ENCODE measurements at regions of chr9 and their contacts with region 1.

Region 1: DNA sequence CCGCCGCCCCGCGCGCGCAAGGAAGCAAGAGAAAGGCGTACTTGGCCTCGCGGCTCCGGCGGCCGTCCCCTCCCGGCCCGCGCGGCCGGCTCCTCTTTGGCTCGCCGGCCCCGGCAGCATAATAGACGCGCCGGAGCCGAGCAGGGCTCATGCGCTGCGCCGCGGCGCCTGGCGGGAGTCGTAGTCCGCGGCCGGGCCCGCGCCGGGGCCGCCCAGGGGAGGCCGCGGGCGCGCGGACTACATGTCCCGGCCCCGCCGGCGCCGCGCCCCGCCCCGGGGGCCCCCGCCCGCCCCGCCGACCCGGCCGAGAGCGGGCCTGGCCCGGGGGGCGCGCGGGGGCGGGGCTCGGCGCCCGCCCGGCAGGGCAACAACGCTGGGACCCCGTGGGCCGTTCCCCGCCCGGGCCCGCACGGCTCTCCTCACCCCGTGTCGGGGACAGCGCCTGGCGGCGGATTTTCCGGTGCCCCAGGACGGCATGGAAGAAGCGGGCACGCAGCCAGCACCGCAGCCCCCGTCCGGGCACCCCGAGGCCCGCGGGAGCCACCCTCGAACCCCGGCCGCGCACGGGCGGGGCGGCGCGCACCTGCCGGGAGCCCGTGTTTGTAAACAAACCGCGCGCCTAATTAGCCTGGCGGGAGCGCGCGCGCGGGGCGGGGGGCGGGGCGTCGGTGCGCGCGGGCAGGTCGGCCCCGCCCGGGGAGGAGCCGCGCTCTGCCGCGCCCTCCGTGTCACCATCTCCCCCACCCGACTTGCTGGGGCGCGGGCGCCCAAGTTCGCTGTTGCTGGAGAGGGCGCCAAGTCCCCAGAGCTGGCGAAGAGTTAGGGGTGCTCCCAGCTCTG is at the start of gene BRD3:
- DNase-seq: peak; percentile 60 to 98 (median 83)

Region 2: GRCh38 chr9:133916159-133916541 is 152.0 kb before region 1 on chr9:
- intact Hi-C with region 1: no loop called
- DNase-seq: peak; percentile 61 to 95 (median 77)

Region 3: DNA sequence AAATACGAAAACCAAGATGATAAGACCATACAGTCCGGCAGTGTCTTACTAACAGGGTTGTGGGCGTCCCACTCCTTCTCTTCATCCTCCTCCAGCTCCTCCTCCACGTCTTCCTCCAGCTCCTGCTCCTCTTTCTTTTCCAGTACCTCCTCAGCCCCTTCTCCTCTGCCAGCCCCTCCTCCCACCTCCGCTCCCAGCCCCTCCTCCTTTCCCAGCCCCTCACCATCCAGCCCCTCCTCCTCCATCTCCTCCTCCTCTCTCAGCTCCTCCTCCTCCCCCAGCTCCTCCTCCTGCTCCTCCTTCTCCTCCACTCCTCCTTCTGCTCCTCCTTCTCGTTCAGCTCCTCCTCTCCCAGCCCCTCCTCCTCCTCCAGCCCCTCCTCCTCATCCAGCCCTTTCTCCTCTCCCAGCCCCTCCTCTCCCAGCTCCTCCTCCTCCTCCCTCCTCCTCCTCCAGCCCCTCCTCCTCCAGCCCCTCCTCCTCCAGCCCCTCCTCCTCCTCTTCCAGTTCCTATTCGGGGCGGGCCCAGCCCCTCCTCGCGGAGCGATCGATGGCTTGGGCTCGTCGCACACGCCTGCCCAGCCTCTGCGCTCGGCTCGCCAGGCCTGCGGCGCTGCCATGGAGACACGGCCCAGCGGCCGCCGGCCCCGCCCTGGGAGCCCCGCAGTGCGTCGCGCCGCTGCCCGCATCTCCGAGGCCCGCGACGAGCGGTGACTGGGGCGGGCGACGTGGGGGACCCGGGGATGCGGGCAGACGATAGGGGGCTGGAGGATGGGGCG is 43.1 kb before region 1 on chr9 and contains the start of gene BRD3OS:
- intact Hi-C with region 1: loop called (anchors 2 kb)
- DNase-seq: peak; percentile 89 to 99 (median 94)

Region 4: DNA sequence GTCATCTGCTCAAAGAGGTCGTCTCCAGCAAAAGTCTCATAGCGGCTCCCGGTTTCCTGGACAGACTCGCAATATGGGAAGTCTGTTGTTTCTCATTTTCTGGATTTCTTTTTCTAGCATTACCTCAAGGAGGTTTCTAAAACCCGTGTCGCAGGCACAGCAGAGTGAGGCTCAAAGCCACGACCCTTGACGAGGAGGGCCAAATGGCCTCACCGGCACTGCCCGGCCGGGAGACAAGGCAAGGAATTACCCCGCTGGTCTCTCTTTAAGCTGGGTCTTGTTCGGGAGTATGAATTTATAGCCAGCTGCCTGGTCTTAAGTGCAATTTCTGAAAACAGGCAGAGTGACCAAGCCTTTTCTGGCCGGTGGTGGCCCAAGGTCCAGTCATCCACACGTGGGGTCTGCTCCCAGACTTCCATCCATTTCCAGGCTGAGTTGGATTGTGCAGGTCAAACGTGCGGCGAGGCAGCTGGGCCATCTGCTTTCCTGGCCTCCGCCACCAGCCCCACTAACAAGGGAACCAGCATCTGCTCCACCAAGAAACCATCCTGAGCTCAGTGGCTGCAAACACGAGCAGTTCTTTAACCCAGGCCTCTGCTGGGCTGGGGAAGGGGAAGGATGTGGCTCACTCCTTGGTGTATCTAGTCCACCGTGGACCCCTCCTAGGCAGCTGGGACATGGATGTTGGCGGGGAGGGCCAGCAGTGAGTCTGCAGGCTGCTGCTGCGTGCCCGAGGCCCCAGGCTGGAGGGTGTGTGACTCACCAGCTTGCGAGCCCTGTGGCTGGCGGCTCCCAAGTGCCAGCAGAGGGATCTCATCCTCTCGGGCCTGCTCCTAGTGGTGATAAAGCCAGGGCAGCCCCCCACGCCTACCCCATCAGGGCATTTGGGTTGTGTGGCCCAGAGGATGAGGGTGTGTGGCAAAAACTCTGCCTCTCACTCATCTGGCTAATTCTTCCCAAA is 517.9 kb after region 1 on chr9:
- intact Hi-C with region 1: no loop called
- DNase-seq: peak in 3 of 10 donors; percentile 57 to 85 (median 83)

Measured in posterior cingulate gyrus (tissue), 11 donors.